Activated CD4-positive, alpha-beta memory T cell treated with anti-CD3 and anti-CD28 coated beads for 36 hours (primary cell): ENCODE measurements at regions of chr11 and their contacts with region 1.

Region 1: GRCh38 chr11:88337181-88337986 is at the start of gene CTSC:
- DNase-seq: peak; percentile 95
- H3K4me3 Mint-ChIP-seq: peak within 1 kb of the TSS; percentile 97
- H3K27ac Mint-ChIP-seq: peak within 1 kb of the TSS; percentile 95
- H3K4me1 Mint-ChIP-seq: peaks cover 40% of the 10 kb centered on the region
- H3K27me3 Mint-ChIP-seq: no peaks in the 10 kb centered on the region
- total RNA-seq, gene CTSC: 66.5 to 70.7 TPM

Region 2: GRCh38 chr11:86802601-86803051 is 1534.8 kb before region 1 on chr11:
- CTCF ChIA-PET with region 1: no interaction called
- POLR2A ChIA-PET with region 1: no interaction called
- intact Hi-C with region 1: loop called (anchors 10 kb)
- DNase-seq: peak; percentile 27
- H3K4me3 Mint-ChIP-seq: no peak overlapping the region
- H3K27ac Mint-ChIP-seq: no peak overlapping the region
- H3K4me1 Mint-ChIP-seq: peaks cover 57% of the 10 kb centered on the region
- H3K27me3 Mint-ChIP-seq: peaks cover 51% of the 10 kb centered on the region

Region 3: GRCh38 chr11:87901341-87901740 is 436.0 kb before region 1 on chr11:
- CTCF ChIA-PET with region 1: no interaction called
- POLR2A ChIA-PET with region 1: no interaction called
- intact Hi-C with region 1: no loop called
- DNase-seq: no peak
- H3K4me3 Mint-ChIP-seq: no peak overlapping the region
- H3K27ac Mint-ChIP-seq: no peak overlapping the region
- H3K4me1 Mint-ChIP-seq: no peaks in the 10 kb centered on the region
- H3K27me3 Mint-ChIP-seq: peaks cover 2% of the 10 kb centered on the region

Region 4: GRCh38 chr11:88174709-88175568 is 162.4 kb before region 1 on chr11 and contains the start of gene RAB38:
- CTCF ChIA-PET with region 1: no interaction called
- POLR2A ChIA-PET with region 1: no interaction called
- intact Hi-C with region 1: loop called (anchors 2 kb)
- DNase-seq: peak; percentile 74
- H3K4me3 Mint-ChIP-seq: peak within 1 kb of the TSS; percentile 70
- H3K27ac Mint-ChIP-seq: no peak within 1 kb of the TSS
- H3K4me1 Mint-ChIP-seq: peaks cover 37% of the 10 kb centered on the region
- H3K27me3 Mint-ChIP-seq: peaks cover 20% of the 10 kb centered on the region
- total RNA-seq, gene RAB38: 0.76 to 0.97 TPM

Region 5: DNA sequence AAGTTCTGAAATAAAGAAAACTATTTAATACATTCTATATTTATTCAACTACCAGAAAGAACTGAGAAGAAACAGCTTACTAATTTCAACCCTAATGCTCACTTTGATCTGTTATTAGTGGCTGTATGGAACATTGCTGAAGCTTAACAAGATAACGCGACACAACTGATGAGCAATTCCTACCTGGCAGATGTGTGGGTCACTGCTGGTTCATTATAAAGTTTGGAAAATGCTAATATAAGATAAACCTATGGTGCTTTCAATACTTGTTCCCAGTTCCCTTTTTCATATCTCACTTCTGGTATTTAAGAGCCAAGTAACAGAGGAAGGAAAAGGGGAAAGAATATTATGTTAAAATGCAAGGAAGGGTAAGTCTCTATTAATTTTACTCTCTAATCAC is 10.3 kb before region 1 on chr11:
- CTCF ChIA-PET with region 1: interaction called, 3 read pairs
- POLR2A ChIA-PET with region 1: interaction called, 36 read pairs
- intact Hi-C with region 1: loop called (anchors 1 kb)
- DNase-seq: no peak
- H3K4me3 Mint-ChIP-seq: no peak overlapping the region
- H3K27ac Mint-ChIP-seq: no peak overlapping the region
- H3K4me1 Mint-ChIP-seq: peaks cover 89% of the 10 kb centered on the region
- H3K27me3 Mint-ChIP-seq: no peaks in the 10 kb centered on the region

Region 6: GRCh38 chr11:88414385-88414861 is 77.0 kb after region 1 on chr11:
- CTCF ChIA-PET with region 1: no interaction called
- POLR2A ChIA-PET with region 1: interaction called, 4 read pairs
- intact Hi-C with region 1: loop called (anchors 1 kb)
- DNase-seq: peak; percentile 31
- H3K4me3 Mint-ChIP-seq: no peak overlapping the region
- H3K27ac Mint-ChIP-seq: peak overlapping the region; percentile 78
- H3K4me1 Mint-ChIP-seq: peaks cover 25% of the 10 kb centered on the region
- H3K27me3 Mint-ChIP-seq: no peaks in the 10 kb centered on the region

Region 7: GRCh38 chr11:88480223-88480622 is 142.8 kb after region 1 on chr11:
- CTCF ChIA-PET with region 1: no interaction called
- POLR2A ChIA-PET with region 1: no interaction called
- intact Hi-C with region 1: no loop called
- DNase-seq: no peak
- H3K4me3 Mint-ChIP-seq: no peak overlapping the region
- H3K27ac Mint-ChIP-seq: no peak overlapping the region
- H3K4me1 Mint-ChIP-seq: peaks cover 2% of the 10 kb centered on the region
- H3K27me3 Mint-ChIP-seq: peaks cover 3% of the 10 kb centered on the region

Region 8: GRCh38 chr11:88535916-88536547 is 198.6 kb after region 1 on chr11:
- CTCF ChIA-PET with region 1: interaction called, 5 read pairs
- POLR2A ChIA-PET with region 1: no interaction called
- intact Hi-C with region 1: loop called (anchors 2 kb)
- DNase-seq: no peak
- H3K4me3 Mint-ChIP-seq: no peak overlapping the region
- H3K27ac Mint-ChIP-seq: no peak overlapping the region
- H3K4me1 Mint-ChIP-seq: peaks cover 19% of the 10 kb centered on the region
- H3K27me3 Mint-ChIP-seq: peaks cover 8% of the 10 kb centered on the region

Region 9: GRCh38 chr11:90222459-90223247 is 1885.3 kb after region 1 on chr11 and contains the start of gene CHORDC1:
- CTCF ChIA-PET with region 1: no interaction called
- POLR2A ChIA-PET with region 1: no interaction called
- intact Hi-C with region 1: loop called (anchors 10 kb)
- DNase-seq: peak; percentile 97
- H3K4me3 Mint-ChIP-seq: peak within 1 kb of the TSS; percentile 98
- H3K27ac Mint-ChIP-seq: peak within 1 kb of the TSS; percentile 93
- H3K4me1 Mint-ChIP-seq: peaks cover 42% of the 10 kb centered on the region
- H3K27me3 Mint-ChIP-seq: no peaks in the 10 kb centered on the region
- total RNA-seq, gene CHORDC1: 62.6 to 71.0 TPM